Activated naive CD8-positive, alpha-beta T cell treated with anti-CD3 and anti-CD28 coated beads, Interleukin-2, amount 10 ng/mL, durations not matched to agents 7 days and 5 days (primary cell): ENCODE measurements at regions of chr5 and their contacts with region 1.

Region 1: DNA sequence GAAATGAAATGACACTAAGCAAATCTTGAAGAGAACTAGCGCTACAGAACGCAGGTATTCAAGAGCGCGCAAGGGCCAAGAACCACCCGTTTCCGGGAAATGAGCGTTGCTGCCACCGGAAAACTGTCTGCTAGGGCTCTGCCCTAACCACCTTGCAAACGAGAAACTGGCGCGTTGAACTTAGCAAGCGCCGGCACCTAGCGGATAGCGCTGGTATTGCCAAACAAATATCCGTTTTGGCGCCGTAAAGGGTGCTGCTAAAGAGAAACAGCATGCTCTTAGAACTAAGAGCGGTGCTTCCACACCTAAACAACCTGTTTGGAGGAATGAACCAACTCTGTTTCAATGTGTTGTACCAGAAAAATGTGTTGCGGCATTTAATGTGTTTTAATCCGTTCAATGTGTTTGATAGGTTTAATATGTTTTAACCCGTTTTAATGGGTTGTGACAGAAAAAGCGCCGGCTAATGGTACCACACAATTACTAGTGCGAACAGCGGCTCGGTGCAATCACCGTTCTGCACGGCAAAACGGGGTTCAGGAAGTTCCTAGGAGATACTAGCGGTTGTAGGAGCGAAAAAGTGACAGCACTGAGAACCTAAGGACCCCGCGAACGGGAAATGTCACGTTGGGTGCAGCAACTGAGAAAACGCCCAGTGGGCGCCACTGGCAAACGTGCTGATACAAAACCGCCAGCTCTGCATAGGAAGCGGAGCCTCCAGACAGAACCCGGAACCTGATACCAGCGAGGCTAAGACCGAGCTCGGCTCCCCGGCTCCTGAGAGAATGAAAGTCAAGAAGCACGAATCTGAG is at the start of gene ANXA2R:
- DNase-seq: peak; percentile 87
- ATAC-seq: peak; percentile 48
- H3K4me3 Mint-ChIP-seq: peak within 1 kb of the TSS; percentile 93
- H3K27ac Mint-ChIP-seq: peak within 1 kb of the TSS; percentile 99
- H3K4me1 Mint-ChIP-seq: peaks cover 34% of the 10 kb centered on the region
- H3K27me3 Mint-ChIP-seq: no peaks in the 10 kb centered on the region
- total RNA-seq, gene ANXA2R: 39.2 to 41.1 TPM

Region 2: DNA sequence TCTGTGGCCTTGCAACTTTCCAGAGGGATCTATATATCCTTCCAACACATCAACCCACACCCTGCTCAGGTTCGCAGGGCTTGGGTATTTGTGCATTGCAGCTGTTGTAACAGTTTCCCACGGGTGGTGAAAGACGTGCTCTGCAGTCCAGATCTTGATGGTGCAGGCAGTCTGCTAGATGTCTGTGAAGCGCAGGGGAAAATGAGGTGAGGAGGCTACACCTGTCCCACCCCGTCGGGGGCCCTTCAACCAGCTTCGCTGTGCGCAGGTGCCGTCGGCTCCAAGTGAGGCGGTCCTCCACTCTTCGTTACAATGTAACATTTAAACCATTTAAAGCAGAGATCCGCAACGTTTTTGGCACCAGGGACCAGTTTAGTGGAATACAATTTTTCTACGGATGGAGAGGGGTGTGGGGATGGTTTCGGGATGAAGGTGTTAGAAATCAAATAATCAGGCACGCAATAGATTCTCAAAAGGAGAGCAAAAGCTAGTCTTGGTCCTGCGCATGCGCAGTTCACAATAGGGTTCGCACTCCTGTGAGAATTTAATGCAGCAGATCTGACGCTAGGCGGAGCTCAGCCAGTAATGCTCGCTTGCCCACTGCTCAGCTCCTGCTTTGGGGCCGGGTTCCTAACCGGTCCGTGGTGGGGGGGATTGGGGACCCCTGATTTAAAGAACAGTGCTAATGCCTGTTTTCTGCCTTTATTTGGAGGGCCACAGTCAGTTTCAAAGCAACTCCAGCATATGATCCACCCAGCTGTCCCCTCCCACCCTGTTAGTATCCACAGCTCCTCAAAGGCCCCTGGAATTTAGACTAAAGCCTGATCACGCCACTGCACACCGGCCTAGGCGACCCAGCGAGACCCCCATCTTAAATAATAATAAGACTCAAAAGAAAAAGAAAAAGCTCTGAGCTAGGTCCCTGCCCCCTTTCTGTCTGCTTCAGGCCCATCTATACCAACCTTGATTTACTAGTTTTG is 131.7 kb before region 1 on chr5:
- POLR2A ChIA-PET with region 1: interaction called, 31 read pairs
- DNase-seq: peak; percentile 84
- ATAC-seq: peak; percentile 91
- H3K4me3 Mint-ChIP-seq: peak overlapping the region; percentile 82
- H3K27ac Mint-ChIP-seq: peak overlapping the region; percentile 55
- H3K4me1 Mint-ChIP-seq: peaks cover 11% of the 10 kb centered on the region
- H3K27me3 Mint-ChIP-seq: peaks cover 24% of the 10 kb centered on the region

Region 3: GRCh38 chr5:42994246-42995151 is 46.0 kb before region 1 on chr5:
- POLR2A ChIA-PET with region 1: interaction called, 503 read pairs
- DNase-seq: peak; percentile 84
- ATAC-seq: peak; percentile 59
- H3K4me3 Mint-ChIP-seq: peak overlapping the region; percentile 98
- H3K27ac Mint-ChIP-seq: peak overlapping the region; percentile 98
- H3K4me1 Mint-ChIP-seq: peaks cover 23% of the 10 kb centered on the region
- H3K27me3 Mint-ChIP-seq: no peaks in the 10 kb centered on the region

Region 4: DNA sequence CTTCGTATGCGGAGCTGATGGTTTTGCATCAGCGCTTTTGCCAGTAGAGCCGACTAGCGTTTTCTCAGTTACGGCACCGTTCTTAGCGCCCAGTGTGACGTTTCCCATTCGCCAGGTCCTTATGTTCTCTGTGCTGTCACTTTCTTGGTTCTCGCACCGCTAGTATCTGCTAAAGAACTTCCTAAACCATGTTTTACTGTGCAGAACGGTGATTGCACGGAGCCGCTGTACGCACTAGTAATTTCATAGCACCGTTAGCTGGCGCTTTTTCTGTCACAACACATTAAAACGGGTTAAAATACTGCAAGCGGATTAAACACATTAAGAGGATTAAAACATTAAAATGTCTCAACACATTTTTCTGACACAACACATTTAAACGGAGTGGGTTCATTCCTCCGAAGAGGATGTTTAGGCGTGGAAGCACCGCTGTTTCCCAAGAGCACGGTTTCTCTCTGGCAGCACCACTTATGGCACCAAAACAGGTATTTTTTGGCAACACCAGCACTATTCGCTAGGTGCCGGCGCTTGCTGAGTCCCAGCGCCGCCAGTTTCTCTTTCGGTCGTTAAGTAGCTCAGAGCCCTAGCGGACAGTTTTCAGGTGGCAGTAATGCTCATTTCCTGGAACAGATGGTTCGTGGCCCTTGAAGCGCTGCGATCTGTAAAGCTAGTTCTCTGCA is 20.7 kb before region 1 on chr5:
- POLR2A ChIA-PET with region 1: interaction called, 594 read pairs
- DNase-seq: peak; percentile 75
- ATAC-seq: peak; percentile 72
- H3K4me3 Mint-ChIP-seq: peak overlapping the region; percentile 97
- H3K27ac Mint-ChIP-seq: peak overlapping the region; percentile 100
- H3K4me1 Mint-ChIP-seq: peaks cover 27% of the 10 kb centered on the region
- H3K27me3 Mint-ChIP-seq: no peaks in the 10 kb centered on the region

Region 5: DNA sequence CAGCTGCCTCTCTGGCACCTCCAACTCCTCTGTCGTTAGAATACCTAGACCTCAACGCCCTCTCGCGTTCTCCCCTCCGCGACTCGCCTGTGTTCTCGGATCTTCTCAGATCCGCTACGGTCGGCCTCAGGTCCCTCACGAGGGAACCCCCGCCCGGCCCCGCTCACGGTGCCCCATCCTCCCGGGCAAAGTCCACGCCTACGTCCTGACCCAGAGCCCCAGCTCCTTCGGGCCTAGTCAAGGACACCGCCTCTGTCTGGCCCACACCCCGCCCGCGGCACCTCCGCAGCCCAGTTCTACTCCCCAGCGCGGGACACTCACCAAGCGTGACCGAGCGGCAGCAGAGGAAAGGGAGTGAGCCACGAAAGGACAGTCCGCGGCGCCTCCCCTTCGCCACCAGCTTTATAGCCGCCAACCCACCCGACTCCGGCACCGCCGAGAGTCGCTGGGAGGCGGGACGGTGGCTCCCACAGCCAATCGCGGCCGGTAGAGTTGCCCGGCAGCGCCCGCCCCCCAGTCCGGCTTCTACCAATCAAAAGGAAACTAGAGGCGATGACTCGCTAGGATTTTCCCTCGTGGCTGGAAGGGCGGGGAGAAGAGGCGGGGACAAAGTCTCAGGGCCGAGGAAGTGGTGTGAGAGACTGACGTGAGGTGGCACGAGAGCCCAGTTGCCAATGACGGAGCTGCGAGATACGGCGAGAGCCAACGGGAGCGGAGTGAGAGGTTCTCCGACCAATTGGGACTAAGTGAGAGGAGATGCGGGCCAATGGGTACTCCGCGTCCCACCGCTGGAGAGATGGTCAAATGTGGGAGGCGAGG is 272.8 kb after region 1 on chr5 and contains the start of gene HMGCS1:
- POLR2A ChIA-PET with region 1: interaction called, 14 read pairs
- DNase-seq: peak; percentile 96
- ATAC-seq: peak; percentile 96
- H3K4me3 Mint-ChIP-seq: peak within 1 kb of the TSS; percentile 100
- H3K27ac Mint-ChIP-seq: peak within 1 kb of the TSS; percentile 93
- H3K4me1 Mint-ChIP-seq: peaks cover 31% of the 10 kb centered on the region
- H3K27me3 Mint-ChIP-seq: no peaks in the 10 kb centered on the region
- total RNA-seq, gene HMGCS1: 46.9 to 51.8 TPM